ENCODE measurements at regions of chr19 and their contacts with region 1.

Region 1: GRCh38 chr19:14347999-14348889 is 33.0 kb upstream of the ADGRE5 start:
- DNase-seq: peak; percentile 34 to 81 (median 59)
- ATAC-seq: peak; percentile 71
- H3K4me3 ChIP-seq: peak overlapping the region; percentile 20
- H3K4me3 Mint-ChIP-seq: no peak overlapping the region
- H3K27ac ChIP-seq: no peak overlapping the region
- H3K27ac Mint-ChIP-seq: no peak overlapping the region
- H3K4me1 ChIP-seq: peaks cover 31% of the 10 kb centered on the region
- H3K4me1 Mint-ChIP-seq: peaks cover 18% of the 10 kb centered on the region
- H3K27me3 ChIP-seq: no peaks in the 10 kb centered on the region
- H3K27me3 Mint-ChIP-seq: no peaks in the 10 kb centered on the region
- CTCF ChIP-seq: peak; percentile 96

Region 2: GRCh38 chr19:14073261-14073924 is 274.9 kb before region 1 on chr19:
- CTCF ChIA-PET with region 1: interaction called, 5 read pairs
- POLR2A ChIA-PET with region 1: no interaction called
- intact Hi-C with region 1: loop called in 1 of 2 experiments (anchors 2 kb)
- DNase-seq: peak; percentile 55 to 92 (median 72)
- ATAC-seq: peak; percentile 79
- H3K4me3 ChIP-seq: peak overlapping the region; percentile 77
- H3K4me3 Mint-ChIP-seq: peak overlapping the region; percentile 93
- H3K27ac ChIP-seq: no peak overlapping the region
- H3K27ac Mint-ChIP-seq: peak overlapping the region; percentile 83
- H3K4me1 ChIP-seq: peaks cover 38% of the 10 kb centered on the region
- H3K4me1 Mint-ChIP-seq: peaks cover 17% of the 10 kb centered on the region
- H3K27me3 ChIP-seq: peaks cover 4 to 5% of the 10 kb centered on the region in 2 experiments
- H3K27me3 Mint-ChIP-seq: peaks cover 4% of the 10 kb centered on the region
- CTCF ChIP-seq: no peak

Region 3: DNA sequence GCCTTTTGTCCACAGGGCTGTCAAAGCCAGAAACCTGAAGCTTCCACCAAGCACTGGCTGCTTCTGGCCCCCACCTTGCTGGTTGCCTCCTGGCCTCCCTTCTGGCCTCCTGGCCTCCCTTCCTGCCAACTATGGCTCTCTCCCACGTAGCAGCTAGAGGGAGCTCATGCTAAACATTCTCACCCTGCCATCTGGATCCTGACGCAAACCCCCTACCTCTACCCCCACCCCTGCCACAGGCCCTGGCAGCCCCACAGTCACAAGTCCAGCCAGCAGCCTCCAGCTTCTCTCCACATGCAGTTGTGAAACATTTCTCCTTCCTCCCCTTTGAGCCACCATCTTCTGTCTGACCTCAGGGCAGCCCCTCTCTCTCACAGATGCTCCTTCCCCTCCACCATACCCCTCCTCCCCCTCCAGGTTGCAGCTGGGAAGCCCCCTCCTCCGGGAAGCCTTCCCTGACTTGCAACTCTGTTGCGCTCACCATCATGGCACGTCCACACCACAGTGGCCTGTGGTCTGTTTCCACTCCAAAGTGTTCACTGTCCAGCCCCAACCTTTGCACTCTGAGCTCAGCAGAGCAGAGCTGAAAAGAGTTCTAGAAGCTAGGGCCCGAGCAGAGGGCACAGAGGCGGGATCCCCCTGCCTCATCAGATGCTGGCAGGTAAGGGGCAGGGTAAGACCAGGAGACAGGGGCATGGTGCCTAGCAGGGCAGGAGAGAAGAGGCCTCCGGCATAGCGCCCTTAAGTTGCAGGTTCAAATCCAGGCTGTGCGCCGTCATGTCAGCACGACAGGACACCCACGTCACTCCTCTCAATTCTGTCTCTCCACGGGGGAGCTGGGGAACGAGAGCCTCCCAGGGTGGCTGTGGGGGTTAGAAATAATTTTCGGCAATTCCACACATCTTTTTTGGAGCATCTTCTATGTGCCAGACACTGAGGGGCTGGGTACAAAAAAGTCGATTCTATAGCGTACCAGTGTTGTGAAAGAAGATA is 149.6 kb before region 1 on chr19:
- CTCF ChIA-PET with region 1: interaction called, 15 read pairs
- POLR2A ChIA-PET with region 1: no interaction called
- intact Hi-C with region 1: loop called (anchors 1 to 2 kb)
- DNase-seq: no peak
- ATAC-seq: no peak
- H3K4me3 ChIP-seq: no peak overlapping the region
- H3K4me3 Mint-ChIP-seq: no peak overlapping the region
- H3K27ac ChIP-seq: no peak overlapping the region
- H3K27ac Mint-ChIP-seq: no peak overlapping the region
- H3K4me1 ChIP-seq: peaks cover 20% of the 10 kb centered on the region
- H3K4me1 Mint-ChIP-seq: peaks cover 32% of the 10 kb centered on the region
- H3K27me3 ChIP-seq: no peaks in the 10 kb centered on the region
- H3K27me3 Mint-ChIP-seq: no peaks in the 10 kb centered on the region
- CTCF ChIP-seq: no peak

Region 4: GRCh38 chr19:14337510-14337909 is 10.7 kb before region 1 on chr19:
- CTCF ChIA-PET with region 1: interaction called, 11 read pairs
- POLR2A ChIA-PET with region 1: interaction called, 5 read pairs
- intact Hi-C with region 1: no loop called
- DNase-seq: peak in 9 of 14 experiments; percentile 24 to 76 (median 45)
- ATAC-seq: peak; percentile 73
- H3K4me3 ChIP-seq: no peak overlapping the region
- H3K4me3 Mint-ChIP-seq: no peak overlapping the region
- H3K27ac ChIP-seq: no peak overlapping the region
- H3K27ac Mint-ChIP-seq: no peak overlapping the region
- H3K4me1 ChIP-seq: peaks cover 8% of the 10 kb centered on the region
- H3K4me1 Mint-ChIP-seq: peaks cover 5% of the 10 kb centered on the region
- H3K27me3 ChIP-seq: no peaks in the 10 kb centered on the region
- H3K27me3 Mint-ChIP-seq: no peaks in the 10 kb centered on the region
- CTCF ChIP-seq: no peak

Region 5: DNA sequence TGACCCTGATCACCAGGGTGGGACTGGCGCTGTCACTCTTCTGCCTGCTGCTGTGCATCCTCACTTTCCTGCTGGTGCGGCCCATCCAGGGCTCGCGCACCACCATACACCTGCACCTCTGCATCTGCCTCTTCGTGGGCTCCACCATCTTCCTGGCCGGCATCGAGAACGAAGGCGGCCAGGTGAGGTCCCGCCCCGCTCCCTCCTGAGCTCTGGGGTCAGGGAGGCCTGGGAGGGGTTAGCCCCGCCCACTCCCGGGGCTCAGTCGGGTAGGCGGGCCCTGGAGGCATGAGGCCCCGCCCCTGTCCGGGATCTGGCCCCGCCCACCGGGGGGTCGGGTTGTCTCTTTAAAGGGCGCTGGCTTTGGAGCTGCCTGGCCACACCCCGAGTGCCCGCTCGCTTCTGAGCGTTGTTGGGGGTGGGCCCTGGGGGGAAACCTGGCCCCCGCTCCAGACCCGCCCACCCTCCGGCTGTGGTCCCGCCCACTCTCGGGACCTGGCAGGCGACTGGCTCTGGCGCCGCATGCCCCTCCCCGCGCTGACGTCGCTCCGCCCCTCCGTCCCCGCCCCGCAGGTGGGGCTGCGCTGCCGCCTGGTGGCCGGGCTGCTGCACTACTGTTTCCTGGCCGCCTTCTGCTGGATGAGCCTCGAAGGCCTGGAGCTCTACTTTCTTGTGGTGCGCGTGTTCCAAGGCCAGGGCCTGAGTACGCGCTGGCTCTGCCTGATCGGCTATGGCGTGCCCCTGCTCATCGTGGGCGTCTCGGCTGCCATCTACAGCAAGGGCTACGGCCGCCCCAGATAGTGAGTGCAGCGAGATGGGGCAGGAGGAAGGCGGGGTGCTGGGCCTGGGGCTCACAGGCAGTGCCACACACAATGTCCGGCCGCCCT is 57.8 kb after region 1 on chr19:
- CTCF ChIA-PET with region 1: interaction called, 22 read pairs
- POLR2A ChIA-PET with region 1: interaction called, 5 read pairs
- intact Hi-C with region 1: no loop called
- DNase-seq: peak; percentile 78 to 95 (median 86)
- ATAC-seq: peak; percentile 73
- H3K4me3 ChIP-seq: no peak overlapping the region
- H3K4me3 Mint-ChIP-seq: peak overlapping the region; percentile 69
- H3K27ac ChIP-seq: peak overlapping the region; percentile 22 to 56
- H3K27ac Mint-ChIP-seq: peak overlapping the region; percentile 92
- H3K4me1 ChIP-seq: peaks cover 66% of the 10 kb centered on the region
- H3K4me1 Mint-ChIP-seq: peaks cover 29% of the 10 kb centered on the region
- H3K27me3 ChIP-seq: no peaks in the 10 kb centered on the region
- H3K27me3 Mint-ChIP-seq: no peaks in the 10 kb centered on the region
- CTCF ChIP-seq: peak; percentile 85

Region 6: DNA sequence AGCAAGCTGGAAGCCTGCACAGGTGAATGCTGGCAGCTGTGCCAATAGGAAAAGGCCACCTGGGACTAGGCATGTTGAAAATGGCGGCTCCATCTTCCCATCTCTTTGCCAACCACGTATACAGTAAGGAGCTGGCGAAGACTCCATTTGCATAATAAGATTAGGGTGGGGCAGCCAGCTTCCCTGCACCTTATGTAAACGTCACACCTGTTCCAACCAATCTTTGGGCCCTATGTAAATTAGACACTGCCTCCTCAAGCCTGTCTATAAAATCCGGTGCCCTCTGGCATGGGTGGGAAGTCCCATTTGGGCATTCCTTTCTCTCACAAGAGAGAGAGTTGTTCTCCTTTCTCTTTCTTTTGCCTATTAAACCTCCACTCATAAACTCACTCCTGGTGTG is 413.4 kb after region 1 on chr19:
- CTCF ChIA-PET with region 1: no interaction called
- POLR2A ChIA-PET with region 1: no interaction called
- intact Hi-C with region 1: no loop called
- DNase-seq: no peak
- ATAC-seq: no peak
- H3K4me3 ChIP-seq: no peak overlapping the region
- H3K4me3 Mint-ChIP-seq: no peak overlapping the region
- H3K27ac ChIP-seq: no peak overlapping the region
- H3K27ac Mint-ChIP-seq: no peak overlapping the region
- H3K4me1 ChIP-seq: no peaks in the 10 kb centered on the region
- H3K4me1 Mint-ChIP-seq: no peaks in the 10 kb centered on the region
- H3K27me3 ChIP-seq: peaks cover 0 to 7% of the 10 kb centered on the region in 2 experiments
- H3K27me3 Mint-ChIP-seq: peaks cover 22% of the 10 kb centered on the region
- CTCF ChIP-seq: no peak